Activated CD8-positive, alpha-beta memory T cell treated with anti-CD3 and anti-CD28 coated beads, Interleukin-2, amount 10 ng/mL, durations not matched to agents 7 days and 5 days (primary cell): ENCODE measurements at regions of chr9 and their contacts with region 1.

Region 1: DNA sequence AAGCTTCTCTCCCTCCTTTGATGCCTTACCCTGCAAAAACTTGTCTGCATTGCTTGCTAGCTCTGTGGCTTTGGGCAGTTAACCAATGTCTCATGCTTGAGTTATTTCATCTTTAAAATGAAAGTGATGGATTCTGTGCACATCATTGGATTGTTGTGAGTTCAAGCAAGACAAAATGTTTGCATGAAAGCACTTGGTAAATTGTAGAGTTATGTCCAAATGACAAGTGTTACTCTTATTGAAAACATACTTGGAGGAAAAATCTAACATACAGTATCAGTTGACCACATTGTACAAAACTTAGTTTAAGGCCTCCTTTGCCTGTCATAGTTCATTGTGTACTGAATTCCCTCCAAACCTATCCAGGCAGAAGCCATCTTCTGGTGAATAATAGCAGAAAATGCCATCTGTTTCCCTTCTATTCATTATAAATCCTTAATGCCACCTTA is 30.0 kb downstream of the TGFBR1 start:
- DNase-seq: peak; percentile 63
- ATAC-seq: peak; percentile 55
- H3K4me3 Mint-ChIP-seq: peak overlapping the region; percentile 14
- H3K27ac Mint-ChIP-seq: peak overlapping the region; percentile 58
- H3K4me1 Mint-ChIP-seq: peaks cover 59% of the 10 kb centered on the region
- H3K27me3 Mint-ChIP-seq: no peaks in the 10 kb centered on the region

Region 2: GRCh38 chr9:99118782-99119466 is 16.0 kb before region 1 on chr9:
- CTCF ChIA-PET with region 1: interaction called, 24 read pairs
- DNase-seq: peak; percentile 86
- ATAC-seq: peak; percentile 99
- H3K4me3 Mint-ChIP-seq: peak overlapping the region; percentile 67
- H3K27ac Mint-ChIP-seq: peak overlapping the region; percentile 95
- H3K4me1 Mint-ChIP-seq: peaks cover 77% of the 10 kb centered on the region
- H3K27me3 Mint-ChIP-seq: no peaks in the 10 kb centered on the region